Aorta (tissue), 5 donors: ENCODE measurements at regions of chr5 and their contacts with region 1.

Region 1: DNA sequence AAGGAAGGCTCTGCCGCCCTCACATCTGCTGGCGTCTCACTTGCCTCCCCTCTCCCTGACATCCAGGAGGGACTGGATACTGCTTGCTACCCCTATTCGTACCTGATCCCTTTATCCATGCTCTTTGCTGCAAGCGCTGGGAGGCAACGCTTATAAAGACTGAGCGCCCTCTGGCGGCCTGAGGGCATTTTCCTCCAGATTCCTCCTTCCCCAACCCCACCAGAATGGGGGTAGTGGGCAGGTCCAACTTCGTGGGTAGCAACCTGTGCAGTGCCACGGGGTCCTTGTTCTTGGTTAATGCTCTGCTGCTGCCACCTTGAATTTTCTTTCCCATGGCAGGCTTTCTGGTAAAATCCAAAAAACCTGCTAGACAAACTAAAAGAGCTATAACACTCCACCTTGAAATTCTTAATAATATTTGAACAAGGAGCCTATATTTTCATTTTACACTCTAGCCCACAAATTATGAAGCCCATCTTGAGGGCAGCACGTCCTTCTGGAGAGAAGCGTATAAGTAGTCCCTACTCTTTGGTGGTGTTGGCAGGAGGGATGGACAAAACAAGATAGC is 52.4 kb downstream of the JADE2 start:
- DNase-seq: peak; percentile 88 to 96
- ATAC-seq: peak; percentile 74
- H3K4me3 ChIP-seq: no peak overlapping the region
- H3K27ac ChIP-seq: no peak overlapping the region
- H3K4me1 ChIP-seq: no peaks in the 10 kb centered on the region
- H3K27me3 ChIP-seq: no peaks in the 10 kb centered on the region

Region 2: GRCh38 chr5:134304311-134304710 is 273.6 kb before region 1 on chr5:
- intact Hi-C with region 1: loop called in 1 of 2 experiments (anchors 5 kb)
- DNase-seq: no peak
- ATAC-seq: no peak
- H3K4me3 ChIP-seq: no peak overlapping the region
- H3K27ac ChIP-seq: no peak overlapping the region
- H3K4me1 ChIP-seq: no peaks in the 10 kb centered on the region
- H3K27me3 ChIP-seq: no peaks in the 10 kb centered on the region

Region 3: GRCh38 chr5:134411546-134412266 is 166.2 kb before region 1 on chr5 and contains the start of gene CDKN2AIPNL:
- intact Hi-C with region 1: loop called (anchors 2 to 5 kb)
- DNase-seq: peak; percentile 94 to 98
- ATAC-seq: peak; percentile 98
- H3K4me3 ChIP-seq: peak within 1 kb of the TSS; percentile 60 to 96
- H3K27ac ChIP-seq: peak within 1 kb of the TSS in 1 of 2 donors; percentile 4
- H3K4me1 ChIP-seq: no peaks in the 10 kb centered on the region
- H3K27me3 ChIP-seq: no peaks in the 10 kb centered on the region
- total RNA-seq, gene CDKN2AIPNL: 11.0 to 12.0 TPM

Region 4: GRCh38 chr5:134493461-134494055 is 84.3 kb before region 1 on chr5:
- intact Hi-C with region 1: no loop called
- DNase-seq: peak in 1 of 2 donors; percentile 36
- ATAC-seq: no peak
- H3K4me3 ChIP-seq: no peak overlapping the region
- H3K27ac ChIP-seq: no peak overlapping the region
- H3K4me1 ChIP-seq: no peaks in the 10 kb centered on the region
- H3K27me3 ChIP-seq: no peaks in the 10 kb centered on the region

Region 5: DNA sequence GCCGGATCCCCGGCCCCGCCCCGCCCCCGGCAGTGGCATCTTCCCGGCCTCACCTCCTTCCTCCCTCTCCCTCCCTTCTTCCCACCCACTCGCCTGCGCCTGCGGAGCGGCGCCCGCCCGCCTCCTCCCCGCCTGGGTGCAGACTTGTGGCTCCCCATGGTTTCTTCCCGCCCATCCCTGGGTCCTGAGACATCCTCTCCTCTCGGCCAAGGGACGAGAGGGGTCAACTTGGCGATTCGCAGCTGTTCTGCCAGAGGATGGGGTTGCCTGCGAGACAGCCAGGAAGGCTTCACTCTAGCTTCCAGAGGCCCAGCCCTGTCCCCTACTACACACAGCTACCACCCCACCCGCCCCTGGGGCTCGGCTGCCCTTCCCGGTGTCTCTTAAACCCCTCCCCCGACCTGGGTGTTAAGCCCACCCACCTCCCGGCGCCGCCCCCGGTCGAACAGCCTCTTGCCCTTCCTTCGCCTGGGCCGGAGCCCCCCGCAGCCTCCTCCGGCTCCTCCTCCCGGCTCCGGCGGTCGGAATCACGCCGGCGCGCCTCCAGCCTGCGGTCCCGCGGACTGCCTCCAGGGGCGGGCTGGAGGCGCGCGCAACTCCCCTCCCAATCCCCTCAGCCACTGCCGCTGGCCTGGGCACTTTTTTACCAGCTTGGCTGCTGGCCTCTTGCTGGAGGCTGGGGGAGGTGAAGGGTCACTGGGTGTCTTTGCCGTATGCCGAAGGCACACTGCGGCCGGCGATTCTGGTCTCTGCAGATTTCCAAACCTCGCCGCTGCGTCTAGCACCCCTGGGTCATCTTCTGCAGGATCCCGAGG is 50.5 kb before region 1 on chr5:
- intact Hi-C with region 1: loop called (anchors 2 kb)
- DNase-seq: peak; percentile 92 to 94
- ATAC-seq: peak; percentile 88
- H3K4me3 ChIP-seq: peak overlapping the region; percentile 86 to 94
- H3K27ac ChIP-seq: peak overlapping the region; percentile 1 to 77
- H3K4me1 ChIP-seq: peaks cover 3 to 7% of the 10 kb centered on the region in 2 donors
- H3K27me3 ChIP-seq: no peaks in the 10 kb centered on the region

Region 6: DNA sequence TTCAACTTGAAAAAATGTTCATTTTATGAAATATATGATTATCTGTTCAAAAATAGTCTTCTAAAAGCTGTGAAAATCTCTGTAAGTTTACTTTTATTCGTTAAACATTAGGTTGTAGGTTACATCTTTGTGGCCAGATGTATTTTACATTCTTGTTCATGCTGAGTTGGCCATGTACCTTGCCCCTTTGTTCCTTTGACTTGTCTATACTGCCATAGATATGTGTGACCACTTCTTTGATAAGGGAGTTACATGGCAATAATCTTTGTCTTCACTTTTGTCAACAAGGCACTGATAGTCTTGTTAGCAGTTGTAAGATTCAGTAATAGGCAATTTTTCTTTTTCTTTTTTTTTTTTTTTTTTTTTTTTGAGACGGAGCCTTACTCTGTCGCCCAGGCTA is 86.6 kb after region 1 on chr5:
- intact Hi-C with region 1: no loop called
- DNase-seq: no peak
- ATAC-seq: no peak
- H3K4me3 ChIP-seq: no peak overlapping the region
- H3K27ac ChIP-seq: no peak overlapping the region
- H3K4me1 ChIP-seq: no peaks in the 10 kb centered on the region
- H3K27me3 ChIP-seq: no peaks in the 10 kb centered on the region

Region 7: GRCh38 chr5:134749415-134749814 is 171.5 kb after region 1 on chr5:
- intact Hi-C with region 1: no loop called
- DNase-seq: no peak
- ATAC-seq: no peak
- H3K4me3 ChIP-seq: no peak overlapping the region
- H3K27ac ChIP-seq: no peak overlapping the region
- H3K4me1 ChIP-seq: no peaks in the 10 kb centered on the region
- H3K27me3 ChIP-seq: no peaks in the 10 kb centered on the region